ENCODE measurements at regions of chr2 and their contacts with region 1.

Region 1: DNA sequence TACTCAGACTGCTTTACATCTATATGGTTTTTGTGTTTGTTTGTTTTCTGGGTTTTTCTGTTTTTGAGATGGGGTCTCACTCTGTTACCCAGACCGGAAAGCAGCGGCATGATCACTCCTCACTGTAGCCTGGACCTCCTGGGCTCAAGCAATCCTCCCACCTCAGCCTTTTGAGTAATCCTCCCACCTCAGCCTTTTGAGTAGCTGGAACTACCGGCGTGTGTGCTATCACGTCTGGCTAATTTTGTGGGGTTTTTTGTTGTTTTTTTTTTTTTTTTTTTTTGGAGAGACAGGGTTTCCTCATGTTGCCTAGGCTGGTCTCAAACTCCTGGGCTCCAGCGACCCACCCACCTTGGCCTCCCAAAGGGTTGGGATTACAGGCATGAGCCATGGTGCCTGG is 9.1 kb downstream of the MAP3K2 start:
- DNase-seq: no peak
- ATAC-seq: no peak
- H3K4me3 ChIP-seq: no peak overlapping the region
- H3K4me3 Mint-ChIP-seq: peak overlapping the region in 1 of 10 donors; percentile 16
- H3K27ac ChIP-seq: no peak overlapping the region
- H3K27ac Mint-ChIP-seq: no peak overlapping the region
- H3K4me1 ChIP-seq: peaks cover 0 to 10% of the 10 kb centered on the region in 2 donors
- H3K4me1 Mint-ChIP-seq: peaks cover 40 to 76% (median 70%) of the 10 kb centered on the region in 7 donors
- H3K27me3 ChIP-seq: no peaks in the 10 kb centered on the region
- H3K27me3 Mint-ChIP-seq: no peaks in the 10 kb centered on the region

Region 2: GRCh38 chr2:127365211-127365643 is 13.5 kb before region 1 on chr2:
- CTCF ChIA-PET with region 1: no interaction called
- POLR2A ChIA-PET with region 1: interaction called, 3 read pairs
- intact Hi-C with region 1: loop called in 1 of 2 experiments (anchors 1 kb)
- DNase-seq: no peak
- ATAC-seq: peak; percentile 46
- H3K4me3 ChIP-seq: no peak overlapping the region
- H3K4me3 Mint-ChIP-seq: peak overlapping the region in 4 of 10 donors; percentile 1 to 24 (median 18)
- H3K27ac ChIP-seq: no peak overlapping the region
- H3K27ac Mint-ChIP-seq: peak overlapping the region in 5 of 9 donors; percentile 3 to 76 (median 46)
- H3K4me1 ChIP-seq: peaks cover 6 to 11% of the 10 kb centered on the region in 2 donors
- H3K4me1 Mint-ChIP-seq: peaks cover 9 to 85% (median 67%) of the 10 kb centered on the region in 7 donors
- H3K27me3 ChIP-seq: no peaks in the 10 kb centered on the region
- H3K27me3 Mint-ChIP-seq: no peaks in the 10 kb centered on the region